HEK293 (cell line): ENCODE measurements at regions of chr19 and their contacts with region 1.

Region 1: DNA sequence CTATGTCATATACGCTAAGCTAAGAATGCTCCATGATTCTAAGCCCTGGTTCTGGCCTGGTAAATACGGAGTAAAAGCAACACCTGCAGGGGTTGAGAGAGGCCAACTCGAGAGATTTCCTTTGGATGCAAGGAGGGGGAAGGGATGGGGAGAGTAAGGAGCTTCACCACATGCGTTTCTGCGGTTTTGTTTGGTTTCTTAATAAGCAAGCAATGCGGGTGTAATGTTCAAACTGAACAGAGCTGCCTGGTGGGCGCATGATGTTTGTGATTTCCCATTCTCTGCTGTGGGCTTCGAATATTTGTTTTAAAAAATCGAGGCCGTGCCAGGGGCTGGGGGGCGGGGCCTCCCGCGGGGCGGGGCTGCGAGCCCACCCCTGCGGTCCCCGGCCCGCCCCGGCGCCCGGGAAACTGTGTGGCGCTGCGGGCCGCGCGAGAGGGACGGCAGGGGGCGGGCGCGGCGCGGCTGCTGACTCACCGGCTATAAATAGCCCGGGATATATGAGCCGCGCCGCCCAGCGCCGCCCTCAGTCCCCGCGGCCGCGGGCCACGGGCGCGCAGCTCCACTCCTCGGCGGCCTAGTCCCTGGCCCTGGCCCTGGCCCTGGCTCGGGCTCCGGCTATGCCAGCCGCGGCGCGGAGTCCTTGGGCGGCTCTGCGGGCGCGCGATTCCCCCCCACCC is 5.1 kb downstream of the BBC3 start:
- H3K4me3 ChIP-seq: peak overlapping the region; percentile 91
- H3K27ac ChIP-seq: peak overlapping the region; percentile 92
- H3K4me1 ChIP-seq: peaks cover 26% of the 10 kb centered on the region
- CTCF ChIP-seq: no peak

Region 2: DNA sequence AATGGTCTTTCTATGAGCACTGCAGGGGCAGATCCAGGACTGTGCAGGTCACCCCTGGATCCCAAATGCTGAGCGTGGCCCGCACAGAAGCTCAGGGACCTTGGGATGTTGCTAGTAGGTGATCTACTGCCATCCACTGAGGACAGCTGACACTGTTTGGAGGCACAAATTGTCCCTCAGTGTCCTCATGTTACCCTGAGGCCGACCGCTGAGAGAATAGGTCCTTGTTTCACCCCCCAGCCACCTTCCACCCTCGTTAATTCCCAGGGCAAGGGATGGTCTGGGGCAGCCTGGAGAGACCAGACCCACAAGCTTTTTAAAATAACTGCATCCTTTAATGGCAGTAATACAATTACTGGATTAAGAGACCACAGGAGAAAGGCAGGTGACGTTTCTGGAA is 162.0 kb before region 1 on chr19:
- CTCF ChIA-PET with region 1: no interaction called
- POLR2A ChIA-PET with region 1: no interaction called
- H3K4me3 ChIP-seq: no peak overlapping the region
- H3K27ac ChIP-seq: no peak overlapping the region
- H3K4me1 ChIP-seq: no peaks in the 10 kb centered on the region
- CTCF ChIP-seq: no peak

Region 3: GRCh38 chr19:47130591-47131227 is 95.2 kb before region 1 on chr19 and contains the start of gene SAE1:
- CTCF ChIA-PET with region 1: interaction called, 3 read pairs
- POLR2A ChIA-PET with region 1: interaction called, 12 read pairs
- H3K4me3 ChIP-seq: peak within 1 kb of the TSS; percentile 75
- H3K27ac ChIP-seq: peak within 1 kb of the TSS; percentile 92
- H3K4me1 ChIP-seq: peaks cover 22% of the 10 kb centered on the region
- CTCF ChIP-seq: peak; percentile 97

Region 4: GRCh38 chr19:47197141-47197540 is 28.7 kb before region 1 on chr19:
- CTCF ChIA-PET with region 1: no interaction called
- POLR2A ChIA-PET with region 1: interaction called, 12 read pairs
- H3K4me3 ChIP-seq: no peak overlapping the region
- H3K27ac ChIP-seq: peak overlapping the region; percentile 37; the same call in 1 of the 2 replicates
- H3K4me1 ChIP-seq: no peaks in the 10 kb centered on the region
- CTCF ChIP-seq: no peak

Region 5: DNA sequence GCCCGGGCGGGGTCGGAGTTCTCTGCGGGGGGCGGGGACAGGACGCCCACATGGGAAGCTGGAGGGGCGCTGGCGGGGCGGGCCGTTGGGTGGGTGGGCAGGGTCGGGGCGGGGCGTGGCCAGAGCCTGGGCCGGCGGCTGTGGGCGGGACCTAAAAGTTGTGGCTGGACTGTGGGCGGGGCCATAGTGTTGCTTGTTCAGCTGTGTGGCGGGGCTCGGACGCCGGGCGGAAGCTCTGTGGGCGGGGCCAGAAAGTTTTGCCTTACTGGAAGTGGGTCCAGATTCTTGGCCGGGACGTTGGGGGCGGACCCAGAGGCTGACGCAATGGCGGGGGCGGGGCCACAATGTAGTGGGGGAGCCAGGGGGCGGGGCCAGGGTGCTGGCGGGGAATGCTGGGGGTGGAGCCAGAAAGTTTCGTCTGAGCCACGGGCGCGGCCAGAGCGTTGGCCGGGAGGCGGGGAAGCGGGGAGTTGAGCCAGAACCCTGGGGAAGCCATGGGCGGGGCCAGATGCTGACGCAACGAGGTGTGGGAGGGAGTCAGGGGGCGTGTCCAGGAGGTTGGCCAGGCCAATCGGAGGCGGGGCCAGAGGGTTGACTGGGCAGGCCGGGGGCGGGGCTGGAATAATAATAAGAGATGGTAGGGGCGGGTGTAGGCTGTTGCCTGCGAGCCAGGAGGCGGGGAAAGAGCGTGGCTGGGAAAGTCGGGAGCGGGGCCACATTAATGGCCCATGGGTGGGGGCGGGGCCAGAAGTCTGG is 31.0 kb after region 1 on chr19:
- CTCF ChIA-PET with region 1: no interaction called
- POLR2A ChIA-PET with region 1: interaction called, 83 read pairs
- H3K4me3 ChIP-seq: peak overlapping the region; percentile 70
- H3K27ac ChIP-seq: peak overlapping the region; percentile 67
- H3K4me1 ChIP-seq: peaks cover 19% of the 10 kb centered on the region
- CTCF ChIP-seq: no peak

Region 6: DNA sequence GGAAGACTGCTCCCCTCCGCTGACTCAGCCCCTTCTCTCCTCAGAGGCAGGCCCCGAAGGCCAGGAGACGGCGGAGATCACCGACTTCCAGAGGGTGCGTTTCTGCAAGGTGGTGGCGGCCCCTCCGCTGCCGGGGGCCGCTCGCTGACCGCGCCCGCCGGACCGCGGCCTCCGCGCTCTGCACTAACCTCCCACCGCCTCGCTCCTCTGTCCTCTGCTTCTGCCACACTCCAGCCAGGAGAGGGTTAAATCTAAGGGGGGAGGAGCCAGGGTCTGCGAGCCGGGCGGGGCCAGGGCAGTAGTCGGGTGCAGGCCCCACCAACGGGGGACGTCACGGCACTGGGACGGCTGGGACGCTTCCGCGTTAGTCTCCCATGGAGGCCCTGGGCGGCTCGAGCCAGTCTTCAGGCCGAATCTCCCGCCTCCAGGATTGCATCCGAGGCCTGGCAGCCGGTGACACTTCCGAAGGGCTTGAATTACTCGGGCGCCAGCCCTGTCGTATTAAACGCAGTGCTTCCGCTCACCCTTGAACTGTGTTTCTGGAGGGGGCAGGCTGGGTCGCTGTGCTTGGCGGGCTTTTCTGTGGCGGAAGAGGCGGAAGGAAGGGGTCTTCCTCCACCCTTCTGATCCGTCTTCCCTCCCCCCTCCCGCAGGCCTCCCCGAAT is 47.6 kb after region 1 on chr19:
- CTCF ChIA-PET with region 1: interaction called, 4 read pairs
- POLR2A ChIA-PET with region 1: interaction called, 29 read pairs
- H3K4me3 ChIP-seq: peak overlapping the region; percentile 58
- H3K27ac ChIP-seq: peak overlapping the region; percentile 97
- H3K4me1 ChIP-seq: peaks cover 11% of the 10 kb centered on the region
- CTCF ChIP-seq: no peak

Region 7: GRCh38 chr19:47305309-47305751 is 79.4 kb after region 1 on chr19:
- CTCF ChIA-PET with region 1: no interaction called
- POLR2A ChIA-PET with region 1: no interaction called
- H3K4me3 ChIP-seq: no peak overlapping the region; the same call in 1 of the 2 replicates
- H3K27ac ChIP-seq: no peak overlapping the region
- H3K4me1 ChIP-seq: no peaks in the 10 kb centered on the region
- CTCF ChIP-seq: peak; percentile 75